ENCODE measurements at regions of chr4 and their contacts with region 1.

Region 1: GRCh38 chr4:150874338-150875226 is 140.5 kb downstream of the LRBA start:
- DNase-seq: no peak
- H3K4me3 ChIP-seq: no peak overlapping the region
- H3K27ac ChIP-seq: no peak overlapping the region
- H3K4me1 ChIP-seq: no peaks in the 10 kb centered on the region
- H3K27me3 ChIP-seq: no peaks in the 10 kb centered on the region
- CTCF ChIP-seq: no peak

Region 2: DNA sequence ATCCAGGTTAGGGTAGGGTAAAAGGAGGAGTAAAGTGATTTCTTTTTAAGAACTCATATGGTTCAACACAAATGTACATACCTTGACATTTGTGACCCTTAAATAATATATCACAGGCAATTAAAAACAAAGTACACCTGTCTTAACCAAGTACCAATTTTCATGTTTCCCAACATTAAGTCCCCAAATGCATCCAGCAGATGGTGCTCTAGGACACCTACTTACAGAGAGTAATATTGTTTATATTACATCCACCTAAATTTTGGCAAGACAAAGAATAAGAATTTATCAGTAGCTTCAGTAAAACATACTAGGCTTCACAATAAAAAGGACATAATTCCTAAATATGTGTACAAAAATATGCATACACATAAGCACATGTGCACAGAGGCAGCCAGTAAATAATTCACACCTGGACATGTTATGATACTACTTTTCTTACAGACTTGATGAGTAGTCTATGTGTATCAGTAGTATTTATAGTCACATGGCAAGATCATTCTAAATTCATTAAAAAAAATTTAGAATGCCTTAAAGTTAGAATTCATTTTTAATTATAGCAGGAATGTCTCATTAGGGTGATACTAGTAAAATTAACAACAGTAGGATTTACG is 576.6 kb before region 1 on chr4:
- intact Hi-C with region 1: loop called (anchors 10 kb)
- DNase-seq: peak in 1 of 2 donors; percentile 28
- H3K4me3 ChIP-seq: no peak overlapping the region
- H3K27ac ChIP-seq: no peak overlapping the region
- H3K4me1 ChIP-seq: peaks cover 0 to 4% (median 0%) of the 10 kb centered on the region in 4 donors
- H3K27me3 ChIP-seq: no peaks in the 10 kb centered on the region
- CTCF ChIP-seq: peak; percentile 64

Region 3: DNA sequence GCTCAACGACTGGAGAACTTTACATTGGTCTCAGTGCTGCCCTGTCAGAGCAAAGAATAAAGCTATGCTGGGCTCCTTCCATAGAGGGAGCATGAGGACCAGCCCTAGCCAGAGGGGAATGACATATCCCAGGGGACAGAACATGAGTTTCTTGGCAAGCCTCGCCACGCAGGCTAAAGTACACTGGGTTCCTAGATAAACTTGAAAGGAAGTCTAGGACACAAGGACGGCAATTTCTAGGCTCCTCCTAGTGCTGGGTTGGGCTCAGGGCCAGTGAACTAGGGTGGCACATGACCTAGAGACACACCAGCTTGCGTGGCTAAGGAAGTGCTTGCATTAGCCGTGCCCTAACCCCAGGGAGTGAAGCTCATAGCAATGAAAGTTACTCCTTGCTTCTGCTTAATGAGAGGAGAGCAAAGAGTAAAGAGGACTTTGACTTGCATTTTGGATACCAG is 151.6 kb before region 1 on chr4:
- intact Hi-C with region 1: no loop called
- DNase-seq: peak; percentile 92 to 97
- H3K4me3 ChIP-seq: no peak overlapping the region
- H3K27ac ChIP-seq: peak overlapping the region; percentile 58 to 63
- H3K4me1 ChIP-seq: peaks cover 0 to 16% (median 9%) of the 10 kb centered on the region in 4 donors
- H3K27me3 ChIP-seq: no peaks in the 10 kb centered on the region
- CTCF ChIP-seq: peak; percentile 56 to 66